ENCODE measurements at regions of chr5 and their contacts with region 1.

Region 1: DNA sequence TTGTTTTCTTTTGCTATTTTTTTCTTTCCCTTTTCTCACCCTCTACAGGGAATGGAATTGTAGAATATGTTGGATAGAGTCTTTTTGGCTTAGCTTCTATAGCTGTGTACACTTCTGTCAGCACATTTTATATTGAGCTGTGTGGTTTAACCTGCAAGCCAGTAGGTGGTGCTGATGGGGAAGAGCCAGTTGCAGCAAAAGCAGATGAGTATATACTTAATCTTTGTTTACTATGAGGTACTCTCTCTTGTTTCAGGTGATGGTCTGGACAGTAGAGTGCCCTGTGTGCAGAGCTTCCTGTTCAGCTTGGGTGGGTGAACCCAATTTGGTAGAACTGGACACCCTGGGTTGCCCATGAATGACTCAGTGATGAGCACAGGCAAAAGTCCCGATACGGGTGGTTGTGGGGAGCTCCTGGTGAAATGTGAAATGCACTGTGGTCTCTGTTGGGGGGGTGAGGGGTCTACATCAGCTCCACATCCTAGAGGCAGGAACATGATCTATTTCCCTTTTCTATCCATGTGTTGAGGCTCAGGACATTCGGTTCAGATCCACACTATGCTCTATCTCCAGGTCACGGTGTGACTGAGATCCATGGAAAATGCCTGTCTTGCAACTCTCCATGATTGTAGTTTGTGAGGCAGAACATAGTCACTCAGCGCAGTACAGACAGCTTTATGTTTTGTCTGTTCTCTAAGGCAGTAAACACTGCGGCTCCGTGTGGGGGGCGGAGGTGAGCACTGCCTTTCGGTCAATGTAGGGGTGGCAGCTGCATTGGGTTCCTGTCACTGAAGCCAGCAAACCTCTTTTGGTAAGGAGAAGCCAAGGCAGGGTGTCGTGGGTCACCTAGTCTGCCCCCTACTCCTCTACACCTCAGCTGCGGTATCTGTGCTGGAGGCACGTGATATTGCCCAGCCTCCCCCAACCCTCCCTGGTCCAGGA is 353.2 kb downstream of the PRR16 start:
- DNase-seq: peak; percentile 52
- H3K4me3 ChIP-seq: no peak overlapping the region
- H3K27ac ChIP-seq: no peak overlapping the region
- H3K4me1 ChIP-seq: no peaks in the 10 kb centered on the region
- H3K27me3 ChIP-seq: no peaks in the 10 kb centered on the region

Region 2: DNA sequence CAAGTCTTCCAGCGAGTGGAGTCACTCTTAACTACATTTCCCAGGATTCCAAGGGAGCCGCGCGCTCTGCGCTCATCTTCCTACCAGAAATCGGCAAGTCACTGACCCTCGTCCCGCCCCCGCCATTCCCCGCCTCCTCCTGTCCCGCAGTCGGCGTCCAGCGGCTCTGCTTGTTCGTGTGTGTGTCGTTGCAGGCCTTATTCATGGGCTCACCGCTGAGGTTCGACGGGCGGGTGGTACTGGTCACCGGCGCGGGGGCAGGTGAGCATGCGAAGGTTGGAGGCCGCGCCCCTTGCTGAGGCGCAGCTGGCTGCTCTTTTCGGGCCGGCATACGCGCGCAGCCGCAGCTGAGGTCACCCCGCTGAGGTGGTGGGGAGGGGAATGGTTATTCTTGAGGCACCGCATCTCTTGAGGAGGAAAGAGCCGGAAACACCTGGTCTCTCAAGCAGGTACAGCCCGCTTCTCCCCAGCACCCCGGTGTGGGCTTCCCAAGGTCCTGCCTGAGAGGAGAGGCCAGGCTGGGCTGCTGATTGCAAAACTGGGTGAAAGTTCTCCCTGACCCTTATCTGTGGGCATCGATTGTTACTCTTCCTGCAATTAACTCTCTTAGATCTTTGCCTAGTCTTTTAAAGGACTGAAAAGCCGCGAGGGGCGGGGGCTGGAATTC is 1364.8 kb before region 1 on chr5 and contains the start of gene HSD17B4:
- in situ Hi-C with region 1: loop called (anchors 25 kb)
- DNase-seq: peak; percentile 90
- H3K4me3 ChIP-seq: peak within 1 kb of the TSS; percentile 95
- H3K27ac ChIP-seq: peak within 1 kb of the TSS; percentile 33
- H3K4me1 ChIP-seq: no peaks in the 10 kb centered on the region
- H3K27me3 ChIP-seq: no peaks in the 10 kb centered on the region
- total RNA-seq, gene HSD17B4: 55.8 and 556 TPM in 2 replicates

Region 3: DNA sequence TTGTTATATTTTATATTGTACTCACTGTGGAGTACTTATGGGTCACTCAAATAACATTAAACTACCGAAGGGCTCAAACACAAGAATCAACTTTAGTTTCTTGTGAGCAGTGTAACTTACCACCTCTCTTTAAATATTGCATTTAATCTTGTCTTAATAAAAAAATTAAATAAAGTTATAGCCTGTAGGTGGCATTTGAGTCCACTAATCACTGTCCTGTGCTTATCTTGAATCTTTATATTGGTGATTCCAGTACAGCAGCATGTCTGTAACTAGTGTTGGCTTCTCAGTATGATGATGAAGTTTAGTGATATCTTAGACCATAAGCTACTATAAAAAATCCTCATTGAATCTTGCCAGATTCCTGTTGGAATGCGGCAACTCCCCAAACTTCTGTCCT is 874.2 kb before region 1 on chr5:
- in situ Hi-C with region 1: loop called (anchors 25 kb)
- DNase-seq: peak; percentile 44
- H3K4me3 ChIP-seq: no peak overlapping the region
- H3K27ac ChIP-seq: no peak overlapping the region
- H3K4me1 ChIP-seq: no peaks in the 10 kb centered on the region
- H3K27me3 ChIP-seq: no peaks in the 10 kb centered on the region